ENCODE measurements at regions of chr6 and their contacts with region 1.

Region 1: DNA sequence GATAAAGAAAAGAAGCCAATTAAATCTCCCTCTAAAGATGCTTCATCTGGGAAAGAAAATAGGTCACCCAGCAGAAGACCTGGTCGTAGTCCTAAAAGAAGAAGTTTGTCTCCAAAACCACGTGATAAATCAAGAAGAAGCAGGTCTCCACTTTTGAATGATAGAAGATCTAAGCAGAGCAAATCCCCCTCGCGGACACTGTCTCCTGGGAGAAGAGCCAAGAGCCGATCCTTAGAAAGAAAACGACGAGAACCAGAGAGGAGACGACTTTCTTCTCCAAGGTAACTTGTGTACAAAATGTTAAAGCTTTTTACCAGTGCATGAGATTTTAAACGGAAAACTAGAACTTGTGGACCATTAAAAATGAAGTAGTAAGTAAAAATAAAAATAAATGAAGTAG is 46.5 kb downstream of the FAM217A start:
- DNase-seq: no peak
- H3K4me3 ChIP-seq: no peak overlapping the region
- H3K27me3 ChIP-seq: no peaks in the 10 kb centered on the region
- CTCF ChIP-seq: no peak

Region 2: GRCh38 chr6:4018172-4018905 is 14.1 kb before region 1 on chr6:
- CTCF ChIA-PET with region 1: interaction called, 10 read pairs
- POLR2A ChIA-PET with region 1: no interaction called
- DNase-seq: peak; percentile 68
- H3K4me3 ChIP-seq: peak overlapping the region; percentile 63
- H3K27me3 ChIP-seq: no peaks in the 10 kb centered on the region
- CTCF ChIP-seq: peak; percentile 59

Measured in BJ (cell line).